HCT116 (cell line): ENCODE measurements at regions of chr19 and their contacts with region 1.

Region 1: DNA sequence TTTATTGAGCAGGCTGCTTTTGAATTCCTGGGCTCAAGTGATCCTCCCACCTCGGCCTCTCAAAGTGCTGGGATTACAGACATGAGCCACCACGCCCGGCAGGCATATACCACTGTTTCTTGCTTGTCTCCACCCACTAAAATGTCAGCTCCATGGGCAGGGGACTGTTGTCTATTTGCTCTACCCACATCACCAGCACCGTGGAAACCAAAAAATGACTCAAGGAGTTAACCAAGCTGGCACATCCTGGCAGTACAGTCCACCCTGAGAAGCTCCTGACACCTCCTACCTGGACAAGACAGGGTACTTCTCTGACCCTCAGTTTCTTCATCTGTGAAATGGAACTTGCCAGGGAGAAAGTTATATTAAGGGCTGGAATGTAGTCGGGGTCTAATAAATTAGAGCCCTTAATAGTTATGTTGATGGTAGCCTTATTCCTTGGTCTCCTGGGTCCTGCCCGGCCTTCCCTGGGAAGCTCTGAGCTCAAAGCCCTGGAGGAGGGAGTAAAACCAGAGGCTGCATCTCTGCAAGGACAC is 13.9 kb downstream of the RDH8 start:
- DNase-seq: no peak
- ATAC-seq: peak; percentile 24
- H3K4me3 ChIP-seq: peak overlapping the region; percentile 6 to 24; a peak in 3 of 4 replicates
- H3K27ac ChIP-seq: no peak overlapping the region
- H3K4me1 ChIP-seq: peaks cover 7 to 13% of the 10 kb centered on the region in 2 experiments
- H3K27me3 ChIP-seq: no peaks in the 10 kb centered on the region
- CTCF ChIP-seq: no peak
- POLR2A ChIP-seq: no peak
- RAD21 ChIP-seq: no peak

Region 2: GRCh38 chr19:10000171-10000826 is 26.9 kb before region 1 on chr19:
- CTCF ChIA-PET with region 1: interaction called, 29 read pairs
- POLR2A ChIA-PET with region 1: no interaction called
- RAD21 ChIA-PET with region 1: interaction called in 1 of 2 experiments, 3 read pairs
- intact Hi-C with region 1: no loop called
- DNase-seq: peak; percentile 62
- ATAC-seq: peak; percentile 79
- H3K4me3 ChIP-seq: no peak overlapping the region
- H3K27ac ChIP-seq: no peak overlapping the region
- H3K4me1 ChIP-seq: peaks cover 0 to 15% of the 10 kb centered on the region in 2 experiments; a peak in 3 of 4 replicates
- H3K27me3 ChIP-seq: no peaks in the 10 kb centered on the region
- CTCF ChIP-seq: peak; percentile 84 to 95 (median 91)
- POLR2A ChIP-seq: no peak
- RAD21 ChIP-seq: peak; percentile 80

Region 3: GRCh38 chr19:10230861-10231611 is 203.8 kb after region 1 on chr19 and contains the start of gene S1PR2:
- CTCF ChIA-PET with region 1: no interaction called
- POLR2A ChIA-PET with region 1: no interaction called
- RAD21 ChIA-PET with region 1: no interaction called
- intact Hi-C with region 1: no loop called
- DNase-seq: peak; percentile 49
- ATAC-seq: peak; percentile 84
- H3K4me3 ChIP-seq: peak within 1 kb of the TSS; percentile 78 to 83
- H3K27ac ChIP-seq: peak within 1 kb of the TSS; percentile 85
- H3K4me1 ChIP-seq: peaks cover 4 to 32% of the 10 kb centered on the region in 2 experiments; a peak in 3 of 4 replicates
- H3K27me3 ChIP-seq: no peaks in the 10 kb centered on the region
- CTCF ChIP-seq: no peak
- POLR2A ChIP-seq: no peak
- RAD21 ChIP-seq: no peak
- total RNA-seq, gene S1PR2: 6.1 TPM

Region 4: GRCh38 chr19:10625003-10625776 is 598.0 kb after region 1 on chr19 and contains the start of gene SLC44A2:
- CTCF ChIA-PET with region 1: no interaction called
- POLR2A ChIA-PET with region 1: no interaction called
- RAD21 ChIA-PET with region 1: no interaction called
- intact Hi-C with region 1: no loop called
- DNase-seq: peak; percentile 38
- ATAC-seq: peak; percentile 94
- H3K4me3 ChIP-seq: peak within 1 kb of the TSS; percentile 85 to 92
- H3K27ac ChIP-seq: peak within 1 kb of the TSS; percentile 89
- H3K4me1 ChIP-seq: peaks cover 46 to 62% of the 10 kb centered on the region in 2 experiments
- H3K27me3 ChIP-seq: no peaks in the 10 kb centered on the region
- CTCF ChIP-seq: no peak
- POLR2A ChIP-seq: no peak
- RAD21 ChIP-seq: peak; percentile 34; the same call in 1 of the 2 replicates
- total RNA-seq, gene SLC44A2: 90.9 TPM